MCF 10A (cell line): ENCODE measurements at regions of chr17 and their contacts with region 1.

Region 1: DNA sequence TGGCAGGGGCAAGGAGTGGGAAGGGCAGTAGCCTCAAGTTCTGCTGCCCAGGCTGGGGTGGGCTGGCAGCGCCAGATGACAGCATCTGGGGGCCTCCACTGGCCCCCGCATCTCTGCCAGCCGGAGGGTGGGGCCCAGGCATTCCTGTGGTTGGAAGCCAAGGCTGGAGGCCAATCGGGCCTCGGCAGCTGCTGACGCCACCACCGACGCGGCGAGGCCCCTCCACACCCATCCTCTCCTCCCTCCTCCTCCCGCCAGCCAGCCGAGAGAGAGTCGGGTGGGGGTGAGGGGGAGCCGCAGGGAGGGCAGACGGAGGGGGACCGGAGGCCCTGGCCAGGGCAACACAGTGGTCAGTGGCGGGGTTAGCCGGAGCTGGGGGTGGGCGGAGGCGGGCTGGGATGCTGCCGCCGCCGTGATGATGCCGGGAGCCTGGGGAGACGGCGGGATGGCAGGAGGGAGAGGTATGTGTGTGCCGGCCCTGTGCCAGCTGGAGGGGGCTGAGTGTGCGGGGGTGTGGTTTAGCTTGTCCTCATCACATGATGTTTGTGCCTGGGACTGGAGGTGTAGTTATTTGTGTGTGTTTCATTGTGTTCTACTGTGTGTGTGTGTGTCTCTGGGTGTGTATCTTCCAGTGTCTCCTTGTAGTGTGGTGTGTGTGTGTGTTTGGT is 36.6 kb downstream of the ARHGAP23 start:
- DNase-seq: peak; percentile 77
- H3K4me3 Mint-ChIP-seq: peak overlapping the region; percentile 79
- H3K27ac Mint-ChIP-seq: peak overlapping the region; percentile 98
- H3K4me1 Mint-ChIP-seq: peaks cover 33% of the 10 kb centered on the region
- H3K27me3 Mint-ChIP-seq: no peaks in the 10 kb centered on the region
- CTCF ChIP-seq: no peak

Region 2: GRCh38 chr17:38428112-38428642 is 36.7 kb before region 1 on chr17 and contains the start of gene ARHGAP23:
- CTCF ChIA-PET with region 1: interaction called, 3 read pairs
- POLR2A ChIA-PET with region 1: no interaction called
- intact Hi-C with region 1: loop called (anchors 2 kb)
- DNase-seq: peak; percentile 21
- H3K4me3 Mint-ChIP-seq: peak within 1 kb of the TSS; percentile 59
- H3K27ac Mint-ChIP-seq: no peak within 1 kb of the TSS
- H3K4me1 Mint-ChIP-seq: peaks cover 15% of the 10 kb centered on the region
- H3K27me3 Mint-ChIP-seq: no peaks in the 10 kb centered on the region
- CTCF ChIP-seq: no peak
- total RNA-seq, gene ARHGAP23: 23.2 and 29.2 TPM in 2 replicates